HEK293 (cell line): ENCODE measurements at regions of chr17 and their contacts with region 1.

Region 1: DNA sequence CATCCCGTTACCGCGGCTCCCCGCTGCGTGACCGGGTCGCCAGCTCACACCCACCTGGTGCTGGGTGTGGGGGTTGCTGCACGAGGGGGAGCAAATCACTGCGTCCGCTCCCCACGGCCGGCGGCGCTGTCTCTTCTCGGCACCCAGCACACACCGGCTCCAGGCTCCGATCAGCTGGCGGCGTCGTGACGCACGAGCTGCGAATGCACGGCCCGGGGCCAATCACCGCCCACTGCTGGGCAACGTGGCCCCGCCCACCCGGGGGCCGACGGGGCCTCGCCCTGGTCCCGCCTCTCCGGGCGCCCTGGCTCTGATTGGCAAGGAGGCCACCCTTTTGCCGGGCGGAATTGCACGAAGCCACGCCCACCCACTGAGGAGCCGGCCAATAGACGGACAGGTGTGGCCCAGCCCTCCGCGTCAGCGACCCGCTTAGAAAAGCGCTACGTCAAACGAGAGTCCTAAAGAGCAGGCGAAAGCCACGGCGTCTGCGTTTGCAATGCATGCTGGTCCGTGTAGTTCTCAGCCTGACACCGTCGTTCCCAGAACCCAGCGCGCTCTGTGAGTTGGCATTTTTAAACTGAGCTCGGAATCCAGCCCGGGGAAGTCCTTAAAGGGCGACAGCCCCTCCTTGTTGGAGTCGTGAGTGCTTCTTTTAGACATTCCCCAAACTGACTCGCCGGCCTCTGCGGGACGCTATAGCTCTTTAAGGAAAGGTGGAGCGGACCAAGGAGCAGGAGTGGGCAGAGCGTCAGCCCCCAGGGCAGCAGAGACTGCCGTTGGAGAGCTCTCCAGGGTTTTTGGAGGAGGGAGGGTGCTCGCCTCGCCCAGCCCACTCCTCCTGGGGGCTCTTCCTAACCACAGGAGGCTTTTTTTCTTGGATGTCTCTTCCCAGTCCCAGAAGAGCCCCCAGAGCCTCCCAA is 6.2 kb upstream of the TLCD2 start:
- H3K4me3 ChIP-seq: peak overlapping the region; percentile 86
- H3K27ac ChIP-seq: peak overlapping the region; percentile 98
- H3K4me1 ChIP-seq: peaks cover 16% of the 10 kb centered on the region
- CTCF ChIP-seq: peak; percentile 54

Region 2: DNA sequence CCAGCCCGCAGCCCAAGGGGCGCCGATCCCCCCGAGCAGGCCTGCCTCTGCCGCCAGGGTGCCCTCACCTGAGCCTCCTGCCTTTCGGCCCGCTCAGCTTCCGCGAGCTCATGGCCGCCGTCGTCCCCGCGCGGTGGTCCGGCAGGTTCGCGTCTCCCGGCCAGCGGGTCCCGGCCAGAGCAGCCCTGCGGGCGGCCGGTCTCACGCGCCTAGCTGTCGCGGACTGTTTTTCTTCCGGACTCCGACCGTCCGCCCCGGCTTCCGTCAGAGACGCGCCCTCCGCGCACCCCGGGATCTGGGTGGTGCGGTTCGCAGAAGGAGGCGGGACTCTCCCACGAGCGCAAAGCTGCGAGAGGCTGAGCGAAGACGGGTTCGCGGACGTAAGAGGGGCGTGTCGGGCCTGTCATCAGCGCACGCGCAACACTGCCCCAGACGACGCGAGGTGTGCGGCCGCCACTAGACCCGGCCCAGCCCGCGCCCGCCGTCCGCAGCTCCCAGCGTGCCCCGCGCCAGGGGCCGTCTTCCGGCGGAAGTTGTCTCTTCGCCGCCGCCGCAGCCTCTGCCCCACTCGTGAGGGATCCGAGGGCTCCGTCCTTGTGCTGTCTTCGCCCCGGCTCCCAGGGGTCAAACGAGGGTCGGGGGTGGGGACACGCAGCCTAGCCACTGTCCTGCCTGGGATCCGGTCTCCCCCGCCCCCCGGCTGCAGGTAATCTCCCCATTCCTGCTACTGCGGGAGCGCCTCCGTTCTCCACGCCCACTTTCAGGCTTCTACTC is 199.8 kb before region 1 on chr17 and contains the start of gene INPP5K:
- CTCF ChIA-PET with region 1: no interaction called
- POLR2A ChIA-PET with region 1: interaction called, 16 read pairs
- H3K4me3 ChIP-seq: peak within 1 kb of the TSS; percentile 96
- H3K27ac ChIP-seq: peak within 1 kb of the TSS; percentile 62
- H3K4me1 ChIP-seq: no peaks in the 10 kb centered on the region
- CTCF ChIP-seq: peak; percentile 57

Region 3: DNA sequence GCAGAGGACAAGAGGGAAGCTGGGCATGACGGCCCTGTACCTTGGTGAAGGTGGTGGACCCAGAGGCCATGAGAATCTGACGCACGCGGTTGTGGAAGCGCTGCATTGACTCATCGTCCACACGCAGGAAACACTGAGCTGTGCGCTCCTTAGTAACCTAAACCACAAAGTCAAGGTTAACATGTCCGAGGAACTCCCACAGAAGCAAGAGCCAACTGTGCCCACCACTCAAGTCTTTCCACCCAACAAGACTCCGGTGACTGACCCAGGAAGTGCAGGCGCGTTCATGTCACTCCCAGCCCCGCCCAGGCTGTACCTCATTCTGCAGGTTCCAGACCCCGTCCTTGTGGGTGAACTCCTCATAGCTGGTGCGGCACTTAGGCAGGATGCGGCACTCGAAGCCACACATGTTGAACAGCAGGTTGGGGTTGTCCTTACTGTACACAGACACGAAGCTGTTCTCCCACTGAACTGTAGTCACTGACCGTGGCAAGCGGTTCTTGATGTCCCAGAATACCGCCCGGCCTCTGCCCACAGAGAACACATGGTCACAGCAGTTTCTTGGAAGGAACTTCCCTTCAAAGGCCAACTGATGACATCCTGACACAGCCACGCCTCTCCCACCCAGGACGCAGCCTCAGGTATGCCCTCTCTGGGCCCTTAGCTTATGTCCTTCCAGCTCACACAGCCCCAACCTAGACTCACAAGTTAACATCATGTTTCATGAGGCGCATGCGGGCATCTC is 43.1 kb before region 1 on chr17:
- CTCF ChIA-PET with region 1: interaction called, 17 read pairs
- POLR2A ChIA-PET with region 1: interaction called, 18 read pairs
- H3K4me3 ChIP-seq: no peak overlapping the region
- H3K27ac ChIP-seq: no peak overlapping the region
- H3K4me1 ChIP-seq: no peaks in the 10 kb centered on the region
- CTCF ChIP-seq: no peak

Region 4: DNA sequence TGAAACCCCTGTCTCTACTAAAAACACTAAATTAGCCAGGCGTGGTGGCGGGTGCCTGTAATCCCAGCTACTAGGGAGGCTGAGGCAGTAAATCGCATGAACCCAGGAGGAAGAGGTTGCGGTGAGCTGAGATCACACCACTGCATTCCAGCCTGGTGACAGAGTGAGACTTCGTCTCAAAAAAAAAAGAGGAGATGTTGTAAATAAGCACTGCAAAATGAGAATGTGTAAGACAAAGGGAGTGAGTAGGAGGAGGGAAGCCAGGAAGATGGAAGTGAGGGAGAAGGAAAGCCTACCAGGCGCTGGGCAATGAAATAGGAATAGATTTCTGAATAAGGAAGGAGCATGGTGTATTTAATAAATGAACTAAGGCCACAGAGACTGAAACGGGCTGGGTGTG is 23.0 kb before region 1 on chr17:
- CTCF ChIA-PET with region 1: interaction called, 13 read pairs
- POLR2A ChIA-PET with region 1: no interaction called
- H3K4me3 ChIP-seq: no peak overlapping the region
- H3K27ac ChIP-seq: no peak overlapping the region
- H3K4me1 ChIP-seq: no peaks in the 10 kb centered on the region
- CTCF ChIP-seq: no peak

Region 5: DNA sequence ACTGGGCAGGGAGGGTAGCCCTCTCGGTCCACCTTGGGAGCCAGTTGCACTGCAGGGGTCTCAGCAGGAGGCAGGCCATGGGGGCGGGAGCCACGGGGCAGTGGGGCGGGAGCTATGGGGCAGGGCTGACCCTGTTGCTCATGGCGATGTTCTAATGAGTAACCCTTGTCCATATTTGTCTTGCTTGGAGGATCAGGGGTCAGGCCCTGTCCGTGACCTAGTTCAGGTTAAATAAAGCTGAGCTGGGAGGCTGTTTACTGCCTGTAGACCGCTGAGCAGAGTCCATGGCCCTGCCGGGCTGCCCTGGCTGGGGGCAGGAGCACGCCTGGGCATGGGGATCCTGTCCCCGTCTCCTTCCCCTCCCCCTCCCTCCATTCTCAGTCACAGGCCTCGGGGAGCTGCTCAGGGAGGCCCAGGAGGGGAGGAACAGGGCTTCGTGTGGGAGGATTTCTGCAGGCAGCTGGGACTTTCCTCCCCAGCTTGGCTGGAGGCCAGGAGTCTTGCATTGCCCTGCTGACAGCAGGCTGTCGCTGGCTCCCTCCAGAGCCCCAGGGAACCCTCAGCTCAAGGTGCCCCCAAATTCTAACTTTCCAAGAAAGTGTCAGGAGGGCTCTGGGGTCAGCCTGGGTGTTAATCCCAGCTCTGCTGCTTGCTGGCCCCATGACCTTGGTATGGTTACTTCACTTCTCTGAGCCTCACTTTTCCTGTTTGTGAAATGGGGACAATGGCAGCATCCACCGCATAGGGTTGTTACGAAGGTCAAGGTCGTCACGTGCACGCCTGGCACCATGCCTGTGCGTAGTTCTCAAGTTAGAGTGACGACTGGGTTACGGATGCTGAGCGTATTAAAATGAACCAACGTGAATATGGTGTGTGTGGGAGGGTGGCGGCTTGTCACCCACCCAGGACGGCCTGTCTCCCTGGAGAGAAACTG is 20.3 kb after region 1 on chr17:
- CTCF ChIA-PET with region 1: interaction called, 4 read pairs
- POLR2A ChIA-PET with region 1: interaction called, 18 read pairs
- H3K4me3 ChIP-seq: no peak overlapping the region
- H3K27ac ChIP-seq: no peak overlapping the region; the same call in 1 of the 2 replicates
- H3K4me1 ChIP-seq: no peaks in the 10 kb centered on the region
- CTCF ChIP-seq: no peak

Region 6: GRCh38 chr17:1769822-1770477 is 53.6 kb after region 1 on chr17:
- CTCF ChIA-PET with region 1: interaction called, 4 read pairs
- POLR2A ChIA-PET with region 1: interaction called, 12 read pairs
- H3K4me3 ChIP-seq: no peak overlapping the region
- H3K27ac ChIP-seq: peak overlapping the region; percentile 32
- H3K4me1 ChIP-seq: peaks cover 6% of the 10 kb centered on the region
- CTCF ChIP-seq: no peak

Region 7: DNA sequence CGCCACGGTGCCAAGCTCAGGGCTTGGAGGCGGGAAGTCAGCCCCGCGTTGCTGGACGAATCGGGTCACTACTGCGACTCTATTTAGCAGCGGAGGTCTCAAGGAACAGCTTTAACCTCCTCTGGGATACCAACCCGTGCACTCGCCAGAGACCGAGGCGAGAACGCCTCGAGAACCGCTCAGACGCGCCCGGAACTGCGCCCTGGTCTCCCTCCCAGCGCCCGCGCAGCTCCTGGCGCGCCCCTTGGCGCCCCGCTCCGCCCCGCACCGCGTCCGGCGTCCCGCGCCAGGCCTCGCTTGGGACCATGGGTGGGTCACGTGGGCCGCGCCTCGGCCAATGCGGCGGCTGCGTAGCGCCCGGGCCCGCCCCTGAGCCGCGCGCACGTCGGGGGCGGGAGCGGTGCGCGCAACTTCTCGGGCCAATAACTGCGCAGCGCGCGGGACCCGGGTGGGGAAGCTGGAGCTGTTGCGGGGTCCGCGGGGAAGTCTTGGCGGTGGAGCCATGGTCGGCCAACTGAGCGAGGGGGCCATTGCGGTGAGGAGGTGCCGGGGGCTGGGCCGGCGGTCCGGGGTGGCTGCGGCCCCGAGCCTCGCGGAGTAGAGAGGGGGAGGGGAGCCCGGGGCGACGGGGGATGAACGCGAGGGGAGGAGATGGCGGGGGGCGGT is 113.4 kb after region 1 on chr17 and contains the starts of genes RPA1 and SMYD4:
- CTCF ChIA-PET with region 1: interaction called, 7 read pairs
- POLR2A ChIA-PET with region 1: interaction called, 26 read pairs
- H3K4me3 ChIP-seq: peak within 1 kb of the TSS; percentile 88
- H3K27ac ChIP-seq: peak within 1 kb of the TSS; percentile 59; the same call in 1 of the 2 replicates
- H3K4me1 ChIP-seq: 0 out of 2 replicates have a peak, but pooled peaks cover 3% of the 10 kb centered on the region
- CTCF ChIP-seq: no peak